ENCODE measurements at regions of chr5 and their contacts with region 1.

Region 1: DNA sequence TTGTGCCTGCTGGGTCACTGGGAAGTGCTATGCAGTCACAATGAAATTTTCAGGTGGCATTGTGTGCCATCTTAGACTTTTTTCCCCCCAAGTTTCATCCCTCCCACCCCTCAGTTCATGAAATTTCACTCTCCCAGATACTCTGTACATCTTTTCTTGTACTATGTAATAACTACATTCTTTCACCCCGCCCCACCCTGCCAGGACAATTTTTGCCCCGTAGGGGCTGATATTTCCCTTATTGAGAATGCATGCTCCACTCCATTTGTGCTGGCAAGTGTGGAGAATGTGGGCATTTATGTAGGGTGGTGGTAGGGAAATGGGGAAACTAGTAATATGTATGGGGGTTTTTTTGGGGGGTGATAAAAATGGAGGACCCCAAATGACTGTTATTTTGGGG is 18.1 kb upstream of the HSPB3 start:
- DNase-seq: no peak
- H3K4me3 ChIP-seq: no peak overlapping the region
- H3K4me3 Mint-ChIP-seq: no peak overlapping the region
- H3K27ac Mint-ChIP-seq: peak overlapping the region; percentile 56
- H3K4me1 ChIP-seq: peaks cover 54% of the 10 kb centered on the region
- H3K4me1 Mint-ChIP-seq: peaks cover 35% of the 10 kb centered on the region
- H3K27me3 ChIP-seq: no peaks in the 10 kb centered on the region
- H3K27me3 Mint-ChIP-seq: no peaks in the 10 kb centered on the region
- CTCF ChIP-seq: no peak

Region 2: DNA sequence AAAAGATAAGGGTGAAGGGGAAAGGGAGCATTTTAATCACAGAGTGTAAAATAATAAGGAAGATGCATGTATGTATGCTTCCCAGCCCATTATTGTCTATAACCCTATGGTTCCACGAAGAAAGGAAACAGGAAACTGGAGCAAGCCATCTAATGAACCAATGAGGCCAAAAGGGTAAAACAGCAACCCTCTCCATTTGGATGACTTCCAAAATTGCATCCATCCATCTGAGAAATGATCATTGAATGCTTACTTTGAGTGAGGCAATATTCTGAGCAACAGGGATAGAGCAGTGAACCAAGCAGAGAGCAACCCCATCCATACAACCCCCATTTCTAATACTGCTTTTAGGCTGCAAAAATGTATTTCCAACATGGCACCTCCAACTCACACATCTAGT is 174.0 kb before region 1 on chr5:
- CTCF ChIA-PET with region 1: no interaction called
- POLR2A ChIA-PET with region 1: no interaction called
- intact Hi-C with region 1: no loop called
- DNase-seq: no peak
- H3K4me3 ChIP-seq: no peak overlapping the region
- H3K4me3 Mint-ChIP-seq: no peak overlapping the region
- H3K27ac Mint-ChIP-seq: no peak overlapping the region
- H3K4me1 ChIP-seq: no peaks in the 10 kb centered on the region
- H3K4me1 Mint-ChIP-seq: peaks cover 10% of the 10 kb centered on the region
- H3K27me3 ChIP-seq: no peaks in the 10 kb centered on the region
- H3K27me3 Mint-ChIP-seq: no peaks in the 10 kb centered on the region
- CTCF ChIP-seq: no peak

Region 3: DNA sequence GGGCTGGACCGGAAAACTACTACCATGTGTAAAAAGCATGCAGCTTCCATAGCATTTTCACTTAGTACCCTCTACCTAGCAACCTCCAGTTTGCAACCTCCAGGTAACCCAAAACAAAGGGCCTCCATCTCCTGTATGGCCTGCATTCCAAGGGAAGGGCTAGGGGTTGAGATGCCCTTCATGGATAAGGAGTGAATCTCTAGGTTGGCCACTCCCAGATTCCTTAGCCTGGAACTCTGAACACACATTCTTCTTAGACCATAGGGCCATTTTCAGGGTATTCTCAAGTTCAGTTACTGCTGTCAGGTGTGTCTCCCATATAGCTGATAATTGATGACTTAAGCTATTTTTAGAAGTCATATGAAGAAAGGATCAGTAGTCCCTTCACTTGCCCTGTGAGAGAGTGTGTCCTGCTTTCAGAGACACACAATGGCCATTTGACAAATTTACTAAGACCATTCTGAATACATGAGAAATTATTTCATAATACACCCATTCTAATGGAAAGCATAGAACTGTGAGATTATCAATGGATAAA is 40.6 kb after region 1 on chr5:
- CTCF ChIA-PET with region 1: no interaction called
- POLR2A ChIA-PET with region 1: no interaction called
- intact Hi-C with region 1: loop called (anchors 2 kb)
- DNase-seq: peak in 1 of 2 experiments; percentile 43
- H3K4me3 ChIP-seq: no peak overlapping the region
- H3K4me3 Mint-ChIP-seq: no peak overlapping the region
- H3K27ac Mint-ChIP-seq: no peak overlapping the region
- H3K4me1 ChIP-seq: no peaks in the 10 kb centered on the region; the same call in 1 of the 2 replicates
- H3K4me1 Mint-ChIP-seq: peaks cover 6% of the 10 kb centered on the region
- H3K27me3 ChIP-seq: no peaks in the 10 kb centered on the region
- H3K27me3 Mint-ChIP-seq: no peaks in the 10 kb centered on the region
- CTCF ChIP-seq: no peak

Measured in Caco-2 (cell line).